ENCODE measurements at regions of chr2 and their contacts with region 1.

Region 1: GRCh38 chr2:84805250-84805917 is 75.5 kb downstream of the TRABD2A start:
- DNase-seq: no peak
- ATAC-seq: no peak
- H3K4me3 ChIP-seq: no peak overlapping the region
- H3K4me3 Mint-ChIP-seq: no peak overlapping the region
- H3K27ac ChIP-seq: no peak overlapping the region
- H3K27ac Mint-ChIP-seq: no peak overlapping the region
- H3K4me1 ChIP-seq: no peaks in the 10 kb centered on the region
- H3K4me1 Mint-ChIP-seq: peaks cover 12 to 64% (median 49%) of the 10 kb centered on the region in 7 donors
- H3K27me3 ChIP-seq: no peaks in the 10 kb centered on the region
- H3K27me3 Mint-ChIP-seq: no peaks in the 10 kb centered on the region

Region 2: GRCh38 chr2:84271977-84272376 is 533.4 kb before region 1 on chr2:
- CTCF ChIA-PET with region 1: no interaction called
- POLR2A ChIA-PET with region 1: no interaction called
- intact Hi-C with region 1: no loop called
- DNase-seq: no peak
- ATAC-seq: no peak
- H3K4me3 ChIP-seq: no peak overlapping the region
- H3K4me3 Mint-ChIP-seq: no peak overlapping the region
- H3K27ac ChIP-seq: no peak overlapping the region
- H3K27ac Mint-ChIP-seq: no peak overlapping the region
- H3K4me1 ChIP-seq: peaks cover 6 to 7% of the 10 kb centered on the region in 2 donors
- H3K4me1 Mint-ChIP-seq: peaks cover 0 to 10% (median 7%) of the 10 kb centered on the region in 7 donors
- H3K27me3 ChIP-seq: no peaks in the 10 kb centered on the region
- H3K27me3 Mint-ChIP-seq: peaks cover 9 to 30% (median 17%) of the 10 kb centered on the region in 5 donors

Region 3: DNA sequence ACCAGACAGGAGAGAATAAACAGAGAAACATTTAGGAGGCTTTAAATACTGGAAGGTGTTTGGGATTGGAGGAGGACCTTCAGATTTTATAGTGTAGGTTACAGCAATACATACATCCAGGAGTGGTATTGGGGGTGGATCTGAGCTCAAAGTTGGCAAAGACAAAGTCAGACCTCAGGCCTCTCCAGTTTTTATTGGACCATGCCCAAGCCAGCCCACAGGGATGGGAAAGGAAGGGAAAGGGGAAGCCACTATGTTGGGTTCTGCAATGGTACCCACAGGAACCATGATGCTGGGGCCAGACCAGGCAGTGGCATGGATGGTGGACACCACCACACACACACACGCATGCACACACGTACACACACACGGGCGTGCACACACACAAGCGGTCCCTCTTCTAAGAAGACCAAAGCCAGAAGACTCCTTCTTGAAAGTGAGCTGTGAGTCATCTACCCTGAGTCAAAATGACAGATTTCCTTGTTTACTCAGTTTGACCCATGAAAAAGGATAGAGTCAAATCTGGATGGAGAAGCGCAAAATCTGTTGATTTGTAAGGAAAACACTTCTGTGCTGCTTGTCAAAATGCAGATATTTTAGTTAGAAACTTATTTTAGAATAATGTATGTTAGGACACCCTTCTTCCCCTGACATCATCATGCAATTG is 12.4 kb before region 1 on chr2:
- CTCF ChIA-PET with region 1: no interaction called
- POLR2A ChIA-PET with region 1: interaction called, 3 read pairs
- intact Hi-C with region 1: loop called in 1 of 2 experiments (anchors 2 kb)
- DNase-seq: no peak
- ATAC-seq: no peak
- H3K4me3 ChIP-seq: no peak overlapping the region
- H3K4me3 Mint-ChIP-seq: no peak overlapping the region
- H3K27ac ChIP-seq: no peak overlapping the region
- H3K27ac Mint-ChIP-seq: peak overlapping the region in 1 of 9 donors; percentile 19
- H3K4me1 ChIP-seq: no peaks in the 10 kb centered on the region
- H3K4me1 Mint-ChIP-seq: peaks cover 1 to 27% (median 19%) of the 10 kb centered on the region in 7 donors
- H3K27me3 ChIP-seq: no peaks in the 10 kb centered on the region
- H3K27me3 Mint-ChIP-seq: no peaks in the 10 kb centered on the region

Region 4: DNA sequence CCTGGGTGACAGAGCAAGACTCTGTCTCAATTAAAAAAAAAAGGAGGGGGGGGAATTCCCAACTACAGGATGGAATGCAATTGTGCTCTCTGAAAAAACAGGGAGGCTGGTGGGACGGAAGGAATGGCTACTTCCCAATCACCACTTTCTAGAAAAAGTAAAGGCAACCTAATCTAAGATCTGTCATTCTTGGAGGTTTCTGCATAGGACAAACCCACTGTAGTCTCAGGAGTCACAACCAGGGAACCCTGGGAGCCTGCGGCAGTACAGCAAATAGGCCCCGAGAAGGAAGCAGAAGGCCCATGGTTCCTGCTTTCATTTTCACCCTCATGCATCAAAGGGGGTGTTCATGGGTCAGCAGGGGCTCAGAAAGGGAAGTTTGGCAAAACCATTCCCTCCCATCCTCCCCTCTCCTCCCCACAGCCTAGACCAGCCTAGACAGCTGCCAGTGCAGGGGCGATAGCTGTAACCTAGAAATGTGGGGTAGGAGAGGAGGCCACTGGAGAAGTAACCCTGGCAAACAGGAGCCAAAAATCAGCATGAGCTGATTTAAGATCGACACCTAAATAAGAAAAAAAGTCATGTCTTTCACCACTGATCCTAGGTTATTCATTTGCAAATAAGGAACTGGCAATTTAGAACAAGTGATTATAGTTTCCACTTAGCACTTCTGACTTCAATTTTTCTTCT is 27.5 kb after region 1 on chr2:
- CTCF ChIA-PET with region 1: interaction called, 3 read pairs
- POLR2A ChIA-PET with region 1: interaction called, 3 read pairs
- intact Hi-C with region 1: loop called in 1 of 2 experiments (anchors 2 kb)
- DNase-seq: no peak
- ATAC-seq: peak; percentile 64
- H3K4me3 ChIP-seq: peak overlapping the region; percentile 50
- H3K4me3 Mint-ChIP-seq: peak overlapping the region in 7 of 10 donors; percentile 74 to 89 (median 79)
- H3K27ac ChIP-seq: peak overlapping the region; percentile 79
- H3K27ac Mint-ChIP-seq: peak overlapping the region in 1 of 9 donors; percentile 92
- H3K4me1 ChIP-seq: peaks cover 36 to 93% of the 10 kb centered on the region in 2 donors
- H3K4me1 Mint-ChIP-seq: peaks cover 18 to 46% (median 26%) of the 10 kb centered on the region in 7 donors
- H3K27me3 ChIP-seq: no peaks in the 10 kb centered on the region
- H3K27me3 Mint-ChIP-seq: no peaks in the 10 kb centered on the region

Measured in naive thymus-derived CD4-positive, alpha-beta T cell (primary cell).